ENCODE measurements at regions of chr16 and their contacts with region 1.

Region 1: DNA sequence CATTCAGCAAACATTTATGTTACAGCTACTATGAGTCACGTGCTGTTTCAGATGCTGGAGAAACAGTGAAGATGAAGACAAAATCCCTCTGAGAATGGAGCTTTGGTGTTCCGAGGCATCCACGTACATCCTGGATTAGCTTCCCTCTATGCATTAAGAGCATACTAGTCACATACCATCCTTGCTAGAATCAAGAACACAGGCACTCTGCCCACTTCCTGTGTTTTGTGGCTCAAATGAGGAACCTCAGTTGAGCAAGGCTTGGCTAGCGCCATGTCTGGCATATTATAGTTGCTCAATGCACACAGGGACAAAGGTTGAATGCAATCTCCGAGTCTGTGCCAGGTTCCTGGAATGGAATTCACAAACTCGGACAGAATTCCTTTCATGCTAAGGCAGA is 297.5 kb downstream of the XYLT1 start:
- DNase-seq: peak; percentile 65
- H3K4me3 ChIP-seq: no peak overlapping the region
- H3K27ac ChIP-seq: no peak overlapping the region
- H3K4me1 ChIP-seq: peaks cover 16% of the 10 kb centered on the region
- H3K27me3 ChIP-seq: no peaks in the 10 kb centered on the region

Region 2: GRCh38 chr16:17277977-17278381 is 104.7 kb after region 1 on chr16:
- in situ Hi-C with region 1: loop called (anchors 25 kb)
- DNase-seq: peak; percentile 12
- H3K4me3 ChIP-seq: no peak overlapping the region
- H3K27ac ChIP-seq: no peak overlapping the region
- H3K4me1 ChIP-seq: peaks cover 11% of the 10 kb centered on the region
- H3K27me3 ChIP-seq: no peaks in the 10 kb centered on the region

Measured in GM23248 (cell line).